ENCODE measurements at regions of chr9 and their contacts with region 1.

Region 1: DNA sequence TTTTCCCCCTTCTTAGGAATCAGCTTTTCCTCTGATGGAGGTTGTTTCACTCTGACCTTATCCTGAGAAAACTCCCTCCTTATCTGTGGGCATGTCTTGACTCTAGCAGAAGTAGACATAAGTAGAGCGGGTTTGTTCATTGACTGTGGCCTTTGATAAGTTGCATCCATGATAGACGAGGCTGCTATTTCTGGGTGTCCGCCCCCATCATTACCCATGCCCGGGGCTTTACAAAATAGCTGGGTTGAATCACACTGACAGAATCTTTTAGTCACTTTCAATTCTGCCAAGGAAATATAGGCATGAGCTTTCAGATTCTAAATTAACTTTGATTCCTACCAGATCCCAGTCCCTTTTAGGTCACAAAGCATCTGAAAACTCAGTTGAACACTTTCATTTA is 223.8 kb downstream of the SEC61B start:
- DNase-seq: no peak
- ATAC-seq: no peak
- H3K4me3 Mint-ChIP-seq: no peak overlapping the region
- H3K27ac Mint-ChIP-seq: no peak overlapping the region
- H3K4me1 Mint-ChIP-seq: no peaks in the 10 kb centered on the region
- H3K27me3 Mint-ChIP-seq: peaks cover 45% of the 10 kb centered on the region

Region 2: DNA sequence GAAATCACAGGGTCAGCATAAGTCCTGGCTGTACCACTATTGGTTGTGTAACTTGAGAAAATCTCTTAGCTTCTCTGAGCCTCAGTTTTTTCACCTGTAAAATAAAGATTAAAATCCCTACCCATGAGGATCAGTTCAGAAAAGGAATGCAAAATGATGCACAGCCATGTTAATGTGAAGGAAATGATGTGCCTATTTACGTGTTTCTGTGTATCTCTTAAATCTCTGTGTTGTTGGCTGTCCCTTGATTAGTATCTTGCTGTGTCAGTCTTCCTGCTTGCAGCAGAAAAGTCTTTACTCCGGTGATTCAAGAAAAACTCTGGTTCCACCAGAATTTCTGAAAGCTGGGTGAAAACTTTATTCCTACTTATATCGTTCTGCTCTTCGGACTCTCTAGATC is 396.9 kb after region 1 on chr9:
- POLR2A ChIA-PET with region 1: interaction called, 10 read pairs
- DNase-seq: no peak
- ATAC-seq: no peak
- H3K4me3 Mint-ChIP-seq: no peak overlapping the region
- H3K27ac Mint-ChIP-seq: no peak overlapping the region
- H3K4me1 Mint-ChIP-seq: peaks cover 2% of the 10 kb centered on the region
- H3K27me3 Mint-ChIP-seq: no peaks in the 10 kb centered on the region